ENCODE measurements at regions of chr1 and their contacts with region 1.

Region 1: DNA sequence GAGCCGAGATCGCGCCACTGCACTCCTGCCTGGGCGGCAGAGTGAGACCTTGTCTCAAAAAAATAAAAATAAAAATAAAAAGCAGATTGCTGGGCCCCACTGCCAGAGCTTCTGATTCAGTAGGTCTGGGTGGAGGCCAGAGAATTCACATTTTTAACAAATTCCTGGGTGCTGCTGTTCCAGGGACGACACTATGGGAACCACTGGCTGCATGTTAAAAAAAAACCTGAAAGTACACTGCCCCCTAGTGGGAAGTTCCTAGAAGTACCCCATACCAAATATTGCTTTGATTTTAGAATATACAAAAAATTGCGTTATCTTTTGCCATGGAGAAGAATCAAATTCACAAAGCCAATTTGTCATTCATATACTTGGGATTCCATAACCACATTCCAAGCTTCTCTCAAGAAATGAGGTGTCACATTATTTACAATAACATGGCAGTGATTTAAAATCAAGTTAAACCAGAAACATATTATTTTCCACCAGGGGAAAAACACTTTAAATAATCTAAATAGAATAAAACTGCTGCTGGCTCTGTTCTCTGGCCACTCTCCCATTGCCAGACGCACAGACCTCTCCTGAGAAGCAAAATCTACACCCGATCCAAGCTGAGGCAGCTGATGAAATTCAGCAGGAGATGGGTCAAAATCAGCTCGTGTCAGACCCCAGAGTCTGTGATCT is 27.4 kb downstream of the SYF2 start:
- DNase-seq: no peak
- ATAC-seq: peak; percentile 77
- H3K4me3 ChIP-seq: no peak overlapping the region
- H3K27ac ChIP-seq: no peak overlapping the region
- H3K4me1 ChIP-seq: no peaks in the 10 kb centered on the region
- H3K27me3 ChIP-seq: peaks cover 0 to 3% of the 10 kb centered on the region in 2 experiments; a peak in 1 of 4 replicates
- CTCF ChIP-seq: peak; percentile 56 to 65 (median 64)
- EP300 ChIP-seq: no peak
- POLR2A ChIP-seq: no peak
- RAD21 ChIP-seq: peak; percentile 79

Region 2: GRCh38 chr1:24847995-24848881 is 356.7 kb before region 1 on chr1:
- CTCF ChIA-PET with region 1: interaction called, 64 read pairs
- POLR2A ChIA-PET with region 1: no interaction called
- RAD21 ChIA-PET with region 1: interaction called, 22 read pairs
- SMC1A ChIA-PET with region 1: interaction called, 37 read pairs
- in situ Hi-C with region 1: loop called (anchors 5 kb)
- intact Hi-C with region 1: loop called (anchors 1 kb)
- DNase-seq: peak; percentile 71
- ATAC-seq: peak; percentile 97
- H3K4me3 ChIP-seq: peak overlapping the region; percentile 56; the same call in 1 of the 2 replicates
- H3K27ac ChIP-seq: no peak overlapping the region
- H3K4me1 ChIP-seq: no peaks in the 10 kb centered on the region
- H3K27me3 ChIP-seq: no peaks in the 10 kb centered on the region
- CTCF ChIP-seq: peak; percentile 93 to 99 (median 98)
- EP300 ChIP-seq: no peak
- POLR2A ChIP-seq: peak; percentile 84
- RAD21 ChIP-seq: peak; percentile 93

Region 3: GRCh38 chr1:24955161-24955560 is 249.8 kb before region 1 on chr1:
- CTCF ChIA-PET with region 1: interaction called, 7 read pairs
- POLR2A ChIA-PET with region 1: no interaction called
- RAD21 ChIA-PET with region 1: no interaction called
- SMC1A ChIA-PET with region 1: interaction called, 4 read pairs
- in situ Hi-C with region 1: no loop called
- intact Hi-C with region 1: loop called (anchors 5 kb)
- DNase-seq: no peak
- ATAC-seq: peak; percentile 57
- H3K4me3 ChIP-seq: peak overlapping the region; percentile 52
- H3K27ac ChIP-seq: peak overlapping the region; percentile 76
- H3K4me1 ChIP-seq: peaks cover 92% of the 10 kb centered on the region
- H3K27me3 ChIP-seq: no peaks in the 10 kb centered on the region
- CTCF ChIP-seq: no peak
- EP300 ChIP-seq: no peak
- POLR2A ChIP-seq: no peak; the same call in 1 of the 2 replicates
- RAD21 ChIP-seq: no peak

Region 4: GRCh38 chr1:25140073-25140797 is 64.7 kb before region 1 on chr1:
- CTCF ChIA-PET with region 1: interaction called, 11 read pairs
- POLR2A ChIA-PET with region 1: no interaction called
- RAD21 ChIA-PET with region 1: interaction called, 3 read pairs
- SMC1A ChIA-PET with region 1: interaction called, 4 read pairs
- in situ Hi-C with region 1: no loop called
- intact Hi-C with region 1: no loop called
- DNase-seq: peak; percentile 69
- ATAC-seq: peak; percentile 97
- H3K4me3 ChIP-seq: no peak overlapping the region
- H3K27ac ChIP-seq: peak overlapping the region; percentile 11
- H3K4me1 ChIP-seq: peaks cover 26% of the 10 kb centered on the region
- H3K27me3 ChIP-seq: no peaks in the 10 kb centered on the region; a peak in 1 of 4 replicates
- CTCF ChIP-seq: no peak
- EP300 ChIP-seq: peak; percentile 51 to 79; a peak in 3 of 4 replicates
- POLR2A ChIP-seq: no peak
- RAD21 ChIP-seq: no peak; the same call in 1 of the 2 replicates

Region 5: GRCh38 chr1:25190260-25190659 is 14.7 kb before region 1 on chr1:
- CTCF ChIA-PET with region 1: interaction called, 14 read pairs
- POLR2A ChIA-PET with region 1: no interaction called
- RAD21 ChIA-PET with region 1: interaction called, 4 read pairs
- SMC1A ChIA-PET with region 1: interaction called, 3 read pairs
- in situ Hi-C with region 1: no loop called
- intact Hi-C with region 1: no loop called
- DNase-seq: no peak
- ATAC-seq: peak; percentile 54
- H3K4me3 ChIP-seq: no peak overlapping the region
- H3K27ac ChIP-seq: no peak overlapping the region
- H3K4me1 ChIP-seq: no peaks in the 10 kb centered on the region
- H3K27me3 ChIP-seq: peaks cover 0 to 4% of the 10 kb centered on the region in 2 experiments; a peak in 3 of 4 replicates
- CTCF ChIP-seq: no peak
- EP300 ChIP-seq: no peak
- POLR2A ChIP-seq: no peak
- RAD21 ChIP-seq: no peak

Region 6: DNA sequence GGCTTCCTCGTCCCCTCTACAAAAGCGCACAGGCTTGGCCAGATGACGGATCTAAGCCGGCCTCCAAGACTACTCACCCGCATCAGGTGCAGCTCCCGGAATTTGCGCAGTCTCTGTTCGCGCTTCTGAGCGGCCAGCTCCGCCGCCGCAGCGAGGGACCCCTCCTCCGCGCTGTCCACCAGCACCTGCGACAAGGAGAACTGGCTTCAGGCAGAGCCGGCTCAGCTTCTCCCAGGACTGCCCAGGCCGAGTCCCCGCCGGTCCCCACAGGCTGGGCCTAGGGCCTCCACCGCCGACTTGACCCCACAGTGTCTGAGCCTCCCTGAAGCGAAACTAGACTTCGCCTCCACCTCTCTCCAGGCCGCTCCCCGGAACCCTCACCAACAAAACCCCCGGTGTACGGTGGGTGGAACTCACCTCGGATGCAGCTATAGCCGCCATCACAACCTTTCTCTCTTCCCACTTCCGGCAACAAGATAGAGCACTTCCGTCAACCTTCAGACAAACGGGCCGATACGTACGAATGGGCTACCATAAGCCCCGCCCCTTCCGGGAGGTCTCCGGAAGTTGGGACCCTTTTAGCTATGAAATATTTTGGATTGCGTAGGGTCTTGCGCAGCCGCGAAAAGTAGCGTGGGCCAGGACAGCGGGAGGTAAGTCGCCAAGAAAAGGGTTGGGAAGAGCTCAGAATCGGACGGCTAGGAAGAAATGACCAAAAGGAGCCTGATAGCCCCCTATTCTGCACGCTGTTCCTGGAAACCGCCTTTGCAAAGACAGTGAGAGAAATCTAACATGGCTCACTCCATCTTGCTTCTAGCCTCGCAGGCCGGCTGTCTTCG is 27.3 kb after region 1 on chr1 and contains the start of gene SYF2:
- CTCF ChIA-PET with region 1: interaction called, 12 read pairs
- POLR2A ChIA-PET with region 1: interaction called, 5 read pairs
- RAD21 ChIA-PET with region 1: interaction called, 6 read pairs
- SMC1A ChIA-PET with region 1: interaction called, 7 read pairs
- in situ Hi-C with region 1: no loop called
- intact Hi-C with region 1: no loop called
- DNase-seq: peak; percentile 81
- ATAC-seq: peak; percentile 88
- H3K4me3 ChIP-seq: peak within 1 kb of the TSS; percentile 88
- H3K27ac ChIP-seq: peak within 1 kb of the TSS; percentile 88
- H3K4me1 ChIP-seq: peaks cover 19% of the 10 kb centered on the region
- H3K27me3 ChIP-seq: no peaks in the 10 kb centered on the region
- CTCF ChIP-seq: no peak
- EP300 ChIP-seq: no peak
- POLR2A ChIP-seq: peak; percentile 95
- RAD21 ChIP-seq: no peak
- polyA plus RNA-seq, gene SYF2: 20.3 to 31.3 TPM

Measured in GM12878 (cell line).